Activated CD8-positive, alpha-beta memory T cell treated with anti-CD3 and anti-CD28 coated beads, Interleukin-2, amount 10 ng/mL, durations not matched to agents 7 days and 5 days (primary cell): ENCODE measurements at regions of chr15 and their contacts with region 1.

Region 1: GRCh38 chr15:93047621-93048425 is 41.2 kb downstream of the RGMA start:
- DNase-seq: peak; percentile 48
- ATAC-seq: peak; percentile 56
- H3K4me3 Mint-ChIP-seq: no peak overlapping the region
- H3K27ac Mint-ChIP-seq: no peak overlapping the region
- H3K4me1 Mint-ChIP-seq: peaks cover 8% of the 10 kb centered on the region
- H3K27me3 Mint-ChIP-seq: no peaks in the 10 kb centered on the region

Region 2: GRCh38 chr15:92968926-92969651 is 78.7 kb before region 1 on chr15:
- CTCF ChIA-PET with region 1: no interaction called
- DNase-seq: no peak
- ATAC-seq: no peak
- H3K4me3 Mint-ChIP-seq: no peak overlapping the region
- H3K27ac Mint-ChIP-seq: no peak overlapping the region
- H3K4me1 Mint-ChIP-seq: peaks cover 11% of the 10 kb centered on the region
- H3K27me3 Mint-ChIP-seq: no peaks in the 10 kb centered on the region

Region 3: GRCh38 chr15:93035953-93036800 is 11.6 kb before region 1 on chr15:
- CTCF ChIA-PET with region 1: interaction called, 10 read pairs
- DNase-seq: peak; percentile 68
- ATAC-seq: peak; percentile 74
- H3K4me3 Mint-ChIP-seq: no peak overlapping the region
- H3K27ac Mint-ChIP-seq: no peak overlapping the region
- H3K4me1 Mint-ChIP-seq: peaks cover 5% of the 10 kb centered on the region
- H3K27me3 Mint-ChIP-seq: no peaks in the 10 kb centered on the region

Region 4: GRCh38 chr15:93283854-93284253 is 236.0 kb after region 1 on chr15:
- CTCF ChIA-PET with region 1: no interaction called
- DNase-seq: no peak
- ATAC-seq: no peak
- H3K4me3 Mint-ChIP-seq: no peak overlapping the region
- H3K27ac Mint-ChIP-seq: no peak overlapping the region
- H3K4me1 Mint-ChIP-seq: no peaks in the 10 kb centered on the region
- H3K27me3 Mint-ChIP-seq: peaks cover 10% of the 10 kb centered on the region